ENCODE measurements at regions of chr10 and their contacts with region 1.

Region 1: GRCh38 chr10:12902135-12902572 is 99.4 kb downstream of the CCDC3 start:
- DNase-seq: peak; percentile 12
- H3K4me3 Mint-ChIP-seq: no peak overlapping the region
- H3K27ac Mint-ChIP-seq: no peak overlapping the region
- H3K4me1 Mint-ChIP-seq: no peaks in the 10 kb centered on the region
- H3K27me3 Mint-ChIP-seq: no peaks in the 10 kb centered on the region

Region 2: DNA sequence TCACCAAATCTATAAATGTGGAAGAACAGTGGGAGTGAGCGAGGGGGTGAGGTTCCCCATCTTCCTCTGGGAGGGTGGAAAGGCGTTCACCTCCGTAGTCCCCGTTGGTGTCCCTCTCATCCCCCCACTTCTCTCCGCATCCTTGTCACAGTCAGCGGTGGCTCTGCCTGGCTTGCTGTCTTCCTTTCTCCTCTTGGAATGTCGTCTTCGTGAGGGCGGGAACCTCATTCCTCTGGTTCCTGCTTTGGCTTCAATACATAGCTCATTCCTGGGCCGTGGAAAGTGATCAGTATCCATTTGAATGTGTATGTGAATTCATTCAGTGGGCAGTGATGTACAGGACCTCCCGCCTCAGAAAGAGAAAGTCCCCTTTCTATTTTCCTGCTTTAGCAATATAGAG is 263.4 kb before region 1 on chr10:
- intact Hi-C with region 1: no loop called
- DNase-seq: no peak
- H3K4me3 Mint-ChIP-seq: no peak overlapping the region
- H3K27ac Mint-ChIP-seq: peak overlapping the region; percentile 23
- H3K4me1 Mint-ChIP-seq: peaks cover 46% of the 10 kb centered on the region
- H3K27me3 Mint-ChIP-seq: no peaks in the 10 kb centered on the region

Region 3: DNA sequence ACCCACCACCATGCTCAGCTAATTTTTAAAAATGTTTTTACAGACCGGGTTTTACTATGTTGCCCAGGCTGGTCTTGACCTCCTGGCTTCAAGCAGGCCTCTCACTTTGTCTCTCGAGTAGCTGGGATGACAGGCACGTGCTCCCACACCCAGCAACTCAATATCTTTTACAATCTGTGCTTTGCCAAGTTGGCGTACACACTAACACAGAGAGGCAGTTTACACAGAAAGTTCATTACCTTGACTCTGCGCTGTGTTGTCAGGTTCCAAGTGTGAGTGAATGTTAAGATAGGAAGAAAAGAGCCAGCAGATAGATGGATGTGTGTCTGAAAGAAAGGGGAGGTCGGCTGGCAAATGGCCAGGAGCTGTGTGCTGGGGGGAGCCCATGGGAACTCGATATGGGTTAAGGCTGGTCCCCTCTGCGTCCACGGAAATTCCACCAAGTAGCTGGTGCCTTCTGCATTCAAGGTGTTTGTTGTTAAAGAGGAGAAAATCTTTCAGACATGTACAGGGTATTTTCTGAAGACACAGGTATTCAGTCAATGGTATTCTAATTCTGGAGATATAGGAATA is 253.1 kb before region 1 on chr10:
- intact Hi-C with region 1: no loop called
- DNase-seq: no peak
- H3K4me3 Mint-ChIP-seq: no peak overlapping the region
- H3K27ac Mint-ChIP-seq: no peak overlapping the region
- H3K4me1 Mint-ChIP-seq: peaks cover 14% of the 10 kb centered on the region
- H3K27me3 Mint-ChIP-seq: peaks cover 1% of the 10 kb centered on the region

Region 4: DNA sequence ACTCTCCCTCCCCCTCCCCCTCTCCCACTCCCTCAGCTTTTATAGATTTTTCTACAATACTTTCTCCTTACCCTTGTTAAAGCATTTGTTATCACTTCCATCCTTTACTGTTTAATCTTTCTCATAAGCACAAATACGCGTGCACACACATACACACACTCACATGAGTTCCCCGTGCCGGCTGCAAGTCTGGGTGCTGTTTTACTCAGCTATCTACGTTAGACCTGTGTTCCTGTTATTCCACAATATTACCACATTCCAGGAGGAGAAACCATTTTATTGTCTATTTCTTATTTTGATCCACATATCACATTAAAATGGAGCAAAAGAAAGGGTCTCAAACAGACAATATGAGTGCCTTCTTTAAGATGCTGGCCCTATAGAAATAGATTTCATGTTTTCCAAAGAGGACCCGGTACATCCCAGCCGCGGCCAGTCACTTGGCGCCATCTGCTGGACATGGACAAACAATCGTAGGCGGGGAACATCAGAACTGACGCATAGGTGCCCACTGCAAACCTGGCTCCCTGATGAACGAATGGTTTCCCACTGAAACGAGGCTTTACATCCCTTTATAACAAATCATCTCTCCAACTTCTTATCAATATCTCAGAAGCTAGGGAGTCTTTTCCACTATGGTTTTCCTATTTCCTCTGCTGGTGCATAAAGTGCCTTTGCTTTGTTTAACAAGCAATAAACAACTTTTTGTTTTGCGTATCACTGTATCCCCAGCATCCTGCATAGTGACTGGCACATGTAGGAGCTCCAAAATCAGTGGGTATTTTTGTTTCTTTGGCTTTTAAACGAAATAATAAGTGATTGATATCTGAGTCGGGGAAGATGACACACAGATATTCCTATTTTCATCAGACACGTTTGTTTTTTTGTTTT is 172.7 kb after region 1 on chr10:
- intact Hi-C with region 1: loop called (anchors 10 kb)
- DNase-seq: peak; percentile 22
- H3K4me3 Mint-ChIP-seq: no peak overlapping the region
- H3K27ac Mint-ChIP-seq: no peak overlapping the region
- H3K4me1 Mint-ChIP-seq: peaks cover 6% of the 10 kb centered on the region
- H3K27me3 Mint-ChIP-seq: peaks cover 12% of the 10 kb centered on the region